ENCODE measurements at regions of chr7 and their contacts with region 1.

Region 1: DNA sequence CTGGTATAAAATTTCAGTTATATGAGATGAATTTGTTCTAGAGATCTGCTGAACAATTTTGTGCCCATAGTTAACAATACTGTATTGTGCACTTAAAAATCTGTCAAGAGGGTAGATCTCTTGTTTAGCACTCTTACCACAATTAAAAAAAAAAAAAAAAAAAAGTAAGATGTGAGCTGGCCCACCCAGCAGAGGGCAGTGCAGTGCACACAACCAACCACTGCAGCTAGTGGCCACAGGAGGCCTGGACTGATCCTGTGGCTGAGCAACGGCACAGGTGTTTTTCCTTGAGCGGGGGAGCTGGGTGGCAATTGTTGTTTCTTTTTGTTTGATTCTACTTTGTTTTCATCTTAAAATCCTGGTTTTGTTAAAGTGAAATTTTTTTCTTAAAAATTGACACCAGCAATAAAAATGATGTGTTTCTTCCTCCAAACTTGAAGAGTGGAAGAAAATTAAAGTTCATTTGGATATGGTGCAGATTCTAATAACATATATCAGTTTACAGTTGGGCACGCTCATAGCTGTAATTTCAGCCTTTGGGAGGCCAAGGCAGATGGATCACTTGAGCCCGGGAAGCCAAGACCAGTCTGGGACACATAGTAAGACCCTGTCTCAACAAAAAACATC is 171.1 kb upstream of the TBX20 start:
- DNase-seq: peak; percentile 72
- ATAC-seq: peak; percentile 79

Region 2: GRCh38 chr7:35519971-35520809 is 95.2 kb after region 1 on chr7:
- intact Hi-C with region 1: loop called (anchors 2 kb)
- DNase-seq: peak; percentile 90
- ATAC-seq: peak; percentile 93

Region 3: DNA sequence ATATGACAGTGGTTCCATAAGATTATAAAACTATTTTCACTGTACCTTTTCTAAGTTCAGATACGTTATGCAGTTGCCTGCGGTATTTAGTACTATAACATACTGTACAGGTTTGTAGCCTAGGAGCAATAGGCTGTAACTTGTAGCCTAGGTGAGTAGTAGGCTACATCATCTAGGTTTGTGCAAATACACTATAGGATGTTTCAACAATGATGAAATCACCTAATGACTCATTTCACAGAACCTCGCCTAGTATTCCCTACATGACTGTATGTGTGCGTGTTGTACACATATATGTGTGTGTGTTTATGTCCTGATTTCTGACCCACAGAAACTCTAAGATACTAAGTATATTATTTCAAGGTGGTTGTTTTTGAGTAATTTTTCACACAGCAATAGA is 131.0 kb after region 1 on chr7:
- intact Hi-C with region 1: no loop called
- DNase-seq: no peak
- ATAC-seq: no peak